ENCODE measurements at regions of chr2 and their contacts with region 1.

Region 1: DNA sequence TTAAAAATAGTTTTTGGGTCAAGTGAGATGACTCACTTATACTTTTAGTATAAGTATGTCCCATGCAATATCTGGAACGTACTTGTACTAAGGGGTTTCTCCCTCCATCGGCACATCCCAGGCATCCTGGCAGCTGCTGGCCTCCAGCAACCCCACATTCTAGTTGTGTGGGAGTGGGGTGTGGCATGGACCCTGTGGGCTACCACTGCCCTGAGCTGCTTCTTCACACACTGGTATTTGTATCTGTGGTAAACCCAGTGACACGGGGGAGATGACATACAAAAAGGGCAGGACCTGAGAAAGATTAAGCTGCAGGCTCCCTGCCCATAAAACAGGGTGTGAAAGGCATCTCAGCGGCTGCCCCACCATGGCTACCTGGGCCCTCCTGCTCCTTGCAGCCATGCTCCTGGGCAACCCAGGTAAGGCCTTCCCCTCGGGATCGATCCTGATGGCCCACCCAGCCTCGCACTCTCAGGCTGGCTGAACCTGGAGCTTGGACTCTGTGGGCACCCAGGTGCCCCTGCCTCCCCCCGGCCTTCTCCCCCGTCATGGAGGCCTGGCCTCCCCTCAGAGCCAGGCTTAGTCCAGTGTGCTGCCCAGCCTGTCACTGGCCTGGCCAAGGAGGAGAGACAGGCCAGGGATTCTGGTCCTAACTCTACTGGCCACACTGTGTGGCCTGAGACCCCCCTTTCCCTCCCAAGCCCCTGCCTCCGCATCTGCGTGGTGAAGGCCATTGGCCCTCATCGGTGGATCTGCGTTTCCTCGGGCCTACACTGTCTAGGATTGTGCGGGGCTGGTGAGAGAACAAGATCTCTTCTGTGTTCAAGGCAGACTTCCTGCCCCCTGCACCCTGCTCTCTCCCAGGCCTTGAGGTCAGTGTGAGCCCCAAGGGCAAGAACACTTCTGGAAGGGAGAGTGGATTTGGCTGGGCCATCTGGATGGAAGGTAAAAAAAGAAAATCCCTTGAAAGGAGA is at the start of gene GNLY:
- DNase-seq: peak; percentile 33
- ATAC-seq: peak; percentile 52
- H3K4me3 Mint-ChIP-seq: peak within 1 kb of the TSS; percentile 43
- H3K27ac Mint-ChIP-seq: peak within 1 kb of the TSS; percentile 43
- H3K4me1 Mint-ChIP-seq: peaks cover 11% of the 10 kb centered on the region
- H3K27me3 Mint-ChIP-seq: peaks cover 2% of the 10 kb centered on the region
- CTCF ChIP-seq: no peak
- total RNA-seq, gene GNLY: 46.7 to 52.6 TPM

Region 2: DNA sequence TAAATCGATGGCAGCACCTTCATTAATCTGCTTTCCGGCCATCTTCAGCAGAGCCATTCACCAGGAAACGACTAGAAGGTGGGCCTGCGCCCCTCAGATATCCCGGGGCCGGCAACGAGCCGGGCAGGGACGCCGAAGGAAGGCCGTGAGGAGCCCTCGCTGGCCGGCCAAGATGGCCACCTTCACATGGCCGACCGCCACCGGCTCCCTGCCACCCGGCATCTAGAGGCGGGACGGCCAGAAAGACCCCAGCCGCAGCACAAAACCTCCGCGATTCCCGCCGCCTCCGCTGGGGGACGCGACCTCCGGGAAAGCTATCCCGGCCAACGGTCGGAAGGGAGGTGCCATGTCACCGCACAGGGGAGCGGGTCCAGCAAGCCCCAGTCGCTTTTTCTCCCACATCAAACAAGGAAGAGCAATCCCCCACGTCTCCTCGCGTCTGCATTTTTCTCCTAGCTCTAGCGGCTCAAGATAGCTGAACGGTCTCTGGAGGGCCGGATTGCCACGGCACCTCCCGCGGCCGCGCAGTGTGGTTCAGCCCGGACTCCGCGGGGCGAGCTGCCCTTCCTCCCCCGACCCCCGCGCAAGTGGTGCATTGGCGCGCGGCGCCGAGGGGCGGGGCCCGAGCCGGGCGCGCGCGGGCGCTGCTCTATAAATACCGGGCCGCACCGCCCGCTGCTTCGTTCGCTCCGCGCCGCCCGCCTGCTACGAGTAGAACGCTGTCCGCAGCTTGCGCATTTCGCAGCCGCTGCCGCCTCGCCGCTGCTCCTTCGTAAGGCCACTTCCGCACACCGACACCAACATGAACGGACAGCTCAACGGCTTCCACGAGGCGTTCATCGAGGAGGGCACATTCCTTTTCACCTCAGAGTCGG is 155.6 kb before region 1 on chr2 and contains the start of gene MAT2A:
- CTCF ChIA-PET with region 1: no interaction called
- POLR2A ChIA-PET with region 1: no interaction called
- intact Hi-C with region 1: no loop called
- DNase-seq: peak; percentile 91
- ATAC-seq: peak; percentile 86
- H3K4me3 Mint-ChIP-seq: peak within 1 kb of the TSS; percentile 99
- H3K27ac Mint-ChIP-seq: peak within 1 kb of the TSS; percentile 99
- H3K4me1 Mint-ChIP-seq: peaks cover 41% of the 10 kb centered on the region
- H3K27me3 Mint-ChIP-seq: no peaks in the 10 kb centered on the region
- CTCF ChIP-seq: peak; percentile 65
- total RNA-seq, gene MAT2A: 276 to 282 TPM

Region 3: GRCh38 chr2:85678794-85679672 is 15.3 kb before region 1 on chr2:
- CTCF ChIA-PET with region 1: interaction called, 20 read pairs
- POLR2A ChIA-PET with region 1: interaction called, 3 read pairs
- intact Hi-C with region 1: no loop called
- DNase-seq: peak; percentile 79
- ATAC-seq: peak; percentile 97
- H3K4me3 Mint-ChIP-seq: no peak overlapping the region
- H3K27ac Mint-ChIP-seq: no peak overlapping the region
- H3K4me1 Mint-ChIP-seq: peaks cover 15% of the 10 kb centered on the region
- H3K27me3 Mint-ChIP-seq: peaks cover 2% of the 10 kb centered on the region
- CTCF ChIP-seq: peak; percentile 97